MCF 10A (cell line): ENCODE measurements at regions of chr1 and their contacts with region 1.

Region 1: GRCh38 chr1:174976436-174977108 is 23.2 kb upstream of the CACYBP start:
- DNase-seq: peak; percentile 83
- H3K4me3 Mint-ChIP-seq: no peak overlapping the region
- H3K27ac Mint-ChIP-seq: no peak overlapping the region
- H3K4me1 Mint-ChIP-seq: peaks cover 15% of the 10 kb centered on the region
- H3K27me3 Mint-ChIP-seq: no peaks in the 10 kb centered on the region
- CTCF ChIP-seq: no peak

Region 2: DNA sequence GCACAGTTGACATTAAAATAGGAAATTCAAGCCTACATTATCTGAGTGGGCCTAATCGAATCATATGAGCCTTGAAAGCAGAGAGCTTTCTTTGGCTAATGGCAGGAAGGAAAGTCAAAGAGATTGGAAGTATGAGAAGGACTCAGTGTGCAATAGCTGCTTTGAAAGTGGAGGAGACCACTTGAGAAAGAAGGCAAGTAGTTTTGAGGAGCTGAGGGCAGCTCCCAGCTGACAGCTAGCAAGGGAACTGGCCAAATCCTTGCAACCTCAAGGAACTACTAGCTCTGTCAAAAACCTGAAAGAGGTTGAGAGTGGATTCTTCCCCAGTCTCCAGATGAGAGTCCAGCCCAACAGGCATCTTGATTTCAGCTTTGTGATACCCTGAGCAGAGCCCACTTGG is 125.8 kb before region 1 on chr1:
- CTCF ChIA-PET with region 1: no interaction called
- POLR2A ChIA-PET with region 1: no interaction called
- intact Hi-C with region 1: no loop called
- DNase-seq: no peak
- H3K4me3 Mint-ChIP-seq: no peak overlapping the region
- H3K27ac Mint-ChIP-seq: no peak overlapping the region
- H3K4me1 Mint-ChIP-seq: peaks cover 6% of the 10 kb centered on the region
- H3K27me3 Mint-ChIP-seq: no peaks in the 10 kb centered on the region
- CTCF ChIP-seq: no peak

Region 3: GRCh38 chr1:174990382-174990999 is 13.9 kb after region 1 on chr1:
- CTCF ChIA-PET with region 1: interaction called, 27 read pairs
- POLR2A ChIA-PET with region 1: interaction called, 69 read pairs
- intact Hi-C with region 1: no loop called
- DNase-seq: peak; percentile 91
- H3K4me3 Mint-ChIP-seq: peak overlapping the region; percentile 89
- H3K27ac Mint-ChIP-seq: peak overlapping the region; percentile 98
- H3K4me1 Mint-ChIP-seq: peaks cover 6% of the 10 kb centered on the region
- H3K27me3 Mint-ChIP-seq: no peaks in the 10 kb centered on the region
- CTCF ChIP-seq: no peak

Region 4: DNA sequence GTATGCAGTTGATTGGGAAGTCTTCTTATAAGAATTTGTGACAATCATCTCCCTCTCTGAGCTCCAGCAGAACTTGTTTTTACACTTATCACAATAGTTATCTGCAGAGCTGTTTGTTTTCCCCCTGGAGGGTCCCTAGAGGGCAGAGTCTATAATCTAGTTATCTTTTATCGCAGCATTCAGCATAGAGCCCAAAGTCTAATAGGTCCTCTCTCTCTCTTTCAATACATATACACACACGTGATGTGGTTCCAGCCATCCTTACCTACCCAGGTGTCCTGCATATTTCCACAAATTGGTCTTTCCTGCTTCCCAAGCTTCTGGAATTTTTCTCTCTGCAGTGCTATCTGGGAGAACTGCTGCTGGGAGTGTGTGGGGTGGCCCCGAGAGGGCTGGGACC is 445.6 kb after region 1 on chr1:
- CTCF ChIA-PET with region 1: no interaction called
- POLR2A ChIA-PET with region 1: no interaction called
- intact Hi-C with region 1: no loop called
- DNase-seq: no peak
- H3K4me3 Mint-ChIP-seq: no peak overlapping the region
- H3K27ac Mint-ChIP-seq: no peak overlapping the region
- H3K4me1 Mint-ChIP-seq: peaks cover 6% of the 10 kb centered on the region
- H3K27me3 Mint-ChIP-seq: peaks cover 63% of the 10 kb centered on the region
- CTCF ChIP-seq: no peak